ENCODE measurements at regions of chr6 and their contacts with region 1.

Region 1: DNA sequence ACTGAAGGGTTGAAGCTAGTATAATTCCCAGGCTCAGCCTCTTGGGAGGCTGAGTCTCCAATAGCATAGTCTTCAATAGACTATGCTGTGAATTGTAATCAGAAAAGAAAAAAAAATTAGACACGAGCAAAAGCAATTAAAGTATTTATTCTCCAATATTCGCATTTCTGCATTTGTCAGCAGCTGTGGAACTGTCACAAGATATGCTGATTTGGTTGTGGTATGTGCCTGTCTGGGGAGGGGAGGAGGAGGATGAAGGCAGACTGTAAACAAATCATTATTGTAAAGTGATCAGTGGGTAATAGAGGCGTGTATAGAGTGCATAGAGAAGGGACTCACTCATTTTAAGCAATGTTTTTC is 10.1 kb upstream of the BICRAL start:
- DNase-seq: peak in 2 of 5 donors; percentile 20 to 72
- H3K4me3 ChIP-seq: peak overlapping the region; percentile 35
- H3K4me3 Mint-ChIP-seq: peak overlapping the region; percentile 74 to 88 (median 81)
- H3K27ac ChIP-seq: peak overlapping the region; percentile 67
- H3K27ac Mint-ChIP-seq: peak overlapping the region; percentile 96 to 100 (median 99)
- H3K4me1 ChIP-seq: peaks cover 66% of the 10 kb centered on the region
- H3K4me1 Mint-ChIP-seq: peaks cover 67 to 85% (median 82%) of the 10 kb centered on the region in 3 donors
- H3K27me3 ChIP-seq: no peaks in the 10 kb centered on the region
- H3K27me3 Mint-ChIP-seq: no peaks in the 10 kb centered on the region

Region 2: DNA sequence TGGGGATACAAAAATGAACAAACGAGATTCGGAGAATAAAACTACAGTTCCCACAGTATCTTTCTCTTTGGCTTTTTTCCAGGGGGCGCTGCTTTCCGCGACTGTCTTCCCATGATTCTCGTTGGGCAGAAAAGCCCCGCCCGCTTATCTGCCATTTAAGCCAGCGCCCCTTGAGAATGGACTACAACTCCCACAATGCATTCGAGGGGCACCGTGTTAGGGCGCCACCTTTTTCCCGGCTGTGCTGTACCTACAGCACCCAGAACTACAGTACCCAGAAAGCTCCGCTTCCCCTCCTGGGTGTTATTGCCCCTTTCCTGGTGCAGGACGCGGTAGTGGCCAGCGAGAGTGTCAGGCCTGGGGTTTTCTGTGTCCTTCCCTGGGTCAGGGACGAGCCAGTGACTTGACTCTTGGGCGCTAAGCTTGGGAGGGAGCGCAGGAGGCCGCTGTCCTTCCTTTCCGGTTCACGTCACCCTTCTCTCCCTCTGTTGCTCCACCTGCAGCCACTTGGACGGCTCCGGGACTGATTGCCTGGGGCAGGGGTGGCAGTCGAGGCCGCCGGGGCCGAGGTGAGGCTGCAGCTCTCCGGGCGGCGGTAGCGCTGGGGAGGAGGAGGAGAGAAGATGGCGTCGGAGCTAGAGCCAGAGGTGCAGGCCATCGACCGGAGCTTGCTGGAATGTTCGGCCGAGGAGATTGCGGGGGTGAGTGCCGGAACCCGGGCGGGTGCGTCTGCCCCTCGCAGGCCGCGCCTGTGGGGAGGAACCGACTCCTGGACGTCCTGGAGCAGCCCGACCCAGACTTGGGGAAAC is 207.8 kb before region 1 on chr6 and contains the start of gene UBR2:
- CTCF ChIA-PET with region 1: no interaction called
- POLR2A ChIA-PET with region 1: interaction called, 10 read pairs
- DNase-seq: peak; percentile 83 to 95 (median 92)
- H3K4me3 ChIP-seq: peak within 1 kb of the TSS; percentile 98
- H3K4me3 Mint-ChIP-seq: peak within 1 kb of the TSS; percentile 92 to 100 (median 98)
- H3K27ac ChIP-seq: peak within 1 kb of the TSS; percentile 93
- H3K27ac Mint-ChIP-seq: peak within 1 kb of the TSS; percentile 84 to 100 (median 95)
- H3K4me1 ChIP-seq: peaks cover 19% of the 10 kb centered on the region
- H3K4me1 Mint-ChIP-seq: peaks cover 27 to 46% (median 38%) of the 10 kb centered on the region in 3 donors
- H3K27me3 ChIP-seq: no peaks in the 10 kb centered on the region
- H3K27me3 Mint-ChIP-seq: no peaks in the 10 kb centered on the region
- total RNA-seq, gene UBR2: 26.2 to 27.0 TPM

Region 3: DNA sequence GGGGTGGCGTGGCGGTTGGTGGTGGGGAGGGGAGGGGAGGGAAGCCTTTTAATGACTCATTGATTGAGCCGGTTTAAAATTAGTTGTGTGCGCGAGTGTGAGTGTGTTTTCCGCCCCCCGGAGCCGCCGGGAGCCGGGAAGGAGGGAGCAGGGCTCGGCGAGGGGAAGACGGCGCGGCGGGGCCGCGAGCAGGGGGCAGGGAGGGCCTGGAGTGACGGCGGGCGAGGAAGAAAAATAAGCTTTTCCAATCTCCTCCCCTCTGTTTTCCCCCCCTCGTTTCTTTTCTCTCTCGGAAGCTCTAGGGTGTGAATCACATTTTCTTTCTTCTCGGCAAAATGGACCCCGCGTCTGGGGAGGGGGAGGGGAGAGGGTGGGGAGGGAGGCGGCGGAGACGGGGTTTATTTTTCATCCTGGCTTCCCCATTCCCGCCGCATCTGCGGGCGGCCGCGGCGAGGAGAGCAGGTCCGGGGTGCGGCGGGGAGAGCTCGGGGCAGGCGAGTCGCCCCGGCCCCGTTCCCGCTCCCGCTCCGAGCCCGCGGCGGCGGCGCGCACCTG is 11.0 kb after region 1 on chr6:
- CTCF ChIA-PET with region 1: interaction called, 26 read pairs
- POLR2A ChIA-PET with region 1: interaction called, 372 read pairs
- DNase-seq: peak; percentile 65 to 89 (median 79)
- H3K4me3 ChIP-seq: peak overlapping the region; percentile 95
- H3K4me3 Mint-ChIP-seq: peak overlapping the region; percentile 93 to 100 (median 98)
- H3K27ac ChIP-seq: peak overlapping the region; percentile 99
- H3K27ac Mint-ChIP-seq: peak overlapping the region in 7 of 8 donors; percentile 98 to 100 (median 100)
- H3K4me1 ChIP-seq: peaks cover 64% of the 10 kb centered on the region
- H3K4me1 Mint-ChIP-seq: peaks cover 34 to 35% (median 34%) of the 10 kb centered on the region in 3 donors
- H3K27me3 ChIP-seq: no peaks in the 10 kb centered on the region
- H3K27me3 Mint-ChIP-seq: peaks cover 0 to 13% of the 10 kb centered on the region in 2 donors